ENCODE measurements at regions of chr5 and their contacts with region 1.

Region 1: GRCh38 chr5:87069974-87070624 is 197.6 kb upstream of the RASA1 start:
- DNase-seq: peak; percentile 37 to 45
- H3K4me3 ChIP-seq: no peak overlapping the region
- H3K27ac ChIP-seq: no peak overlapping the region
- H3K4me1 ChIP-seq: peaks cover 19% of the 10 kb centered on the region
- H3K27me3 ChIP-seq: no peaks in the 10 kb centered on the region
- CTCF ChIP-seq: peak; percentile 65

Region 2: GRCh38 chr5:87020099-87020934 is 49.8 kb before region 1 on chr5:
- CTCF ChIA-PET with region 1: no interaction called
- POLR2A ChIA-PET with region 1: no interaction called
- intact Hi-C with region 1: loop called (anchors 5 kb)
- DNase-seq: peak; percentile 49 to 75
- H3K4me3 ChIP-seq: no peak overlapping the region
- H3K27ac ChIP-seq: no peak overlapping the region
- H3K4me1 ChIP-seq: peaks cover 23% of the 10 kb centered on the region
- H3K27me3 ChIP-seq: no peaks in the 10 kb centered on the region
- CTCF ChIP-seq: no peak

Region 3: GRCh38 chr5:87169300-87169991 is 99.3 kb after region 1 on chr5:
- CTCF ChIA-PET with region 1: no interaction called
- POLR2A ChIA-PET with region 1: no interaction called
- intact Hi-C with region 1: loop called (anchors 5 kb)
- DNase-seq: no peak
- H3K4me3 ChIP-seq: no peak overlapping the region
- H3K27ac ChIP-seq: no peak overlapping the region
- H3K4me1 ChIP-seq: no peaks in the 10 kb centered on the region
- H3K27me3 ChIP-seq: no peaks in the 10 kb centered on the region
- CTCF ChIP-seq: no peak

Region 4: GRCh38 chr5:87300744-87301143 is 230.6 kb after region 1 on chr5:
- CTCF ChIA-PET with region 1: no interaction called
- POLR2A ChIA-PET with region 1: interaction called, 12 read pairs
- intact Hi-C with region 1: no loop called
- DNase-seq: peak; percentile 33 to 67
- H3K4me3 ChIP-seq: no peak overlapping the region
- H3K27ac ChIP-seq: 0 out of 2 replicates have a peak overlapping the region, but pooled peaks have one; percentile 6
- H3K4me1 ChIP-seq: peaks cover 29% of the 10 kb centered on the region
- H3K27me3 ChIP-seq: no peaks in the 10 kb centered on the region
- CTCF ChIP-seq: no peak

Region 5: DNA sequence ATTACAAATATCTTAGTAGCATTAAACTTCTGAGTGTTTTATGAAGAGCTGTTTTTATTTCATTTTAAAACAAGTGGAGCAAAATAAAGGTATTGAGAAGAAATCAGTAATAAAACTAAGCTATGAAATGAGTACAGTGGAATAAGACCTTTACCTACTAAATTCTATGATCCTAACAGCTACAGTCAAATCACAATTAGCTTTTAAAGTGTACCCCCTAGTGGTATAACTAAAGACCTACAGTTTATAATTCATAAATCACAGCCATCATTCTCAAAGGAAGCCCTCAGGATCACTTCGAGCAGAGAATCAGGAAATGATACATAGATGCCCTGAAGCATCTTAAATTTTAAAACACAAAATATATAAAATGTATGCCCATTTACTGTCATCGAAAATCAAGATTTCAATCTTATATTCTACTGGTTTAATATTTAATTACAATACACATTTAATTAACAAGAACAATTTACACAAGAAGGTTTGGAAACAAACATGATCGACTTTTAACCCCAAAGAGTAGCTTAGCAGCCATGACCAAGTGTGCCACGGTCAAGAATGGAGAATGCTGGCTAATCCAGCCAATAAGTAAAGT is 330.3 kb after region 1 on chr5:
- CTCF ChIA-PET with region 1: interaction called, 4 read pairs
- POLR2A ChIA-PET with region 1: no interaction called
- intact Hi-C with region 1: loop called (anchors 2 kb)
- DNase-seq: peak in 1 of 2 experiments; percentile 43
- H3K4me3 ChIP-seq: no peak overlapping the region
- H3K27ac ChIP-seq: no peak overlapping the region
- H3K4me1 ChIP-seq: no peaks in the 10 kb centered on the region
- H3K27me3 ChIP-seq: no peaks in the 10 kb centered on the region
- CTCF ChIP-seq: peak; percentile 83

Measured in PC-9 (cell line).